Left ventricle myocardium superior (tissue), 1 donor: ENCODE measurements at regions of chr7 and their contacts with region 1.

Region 1: DNA sequence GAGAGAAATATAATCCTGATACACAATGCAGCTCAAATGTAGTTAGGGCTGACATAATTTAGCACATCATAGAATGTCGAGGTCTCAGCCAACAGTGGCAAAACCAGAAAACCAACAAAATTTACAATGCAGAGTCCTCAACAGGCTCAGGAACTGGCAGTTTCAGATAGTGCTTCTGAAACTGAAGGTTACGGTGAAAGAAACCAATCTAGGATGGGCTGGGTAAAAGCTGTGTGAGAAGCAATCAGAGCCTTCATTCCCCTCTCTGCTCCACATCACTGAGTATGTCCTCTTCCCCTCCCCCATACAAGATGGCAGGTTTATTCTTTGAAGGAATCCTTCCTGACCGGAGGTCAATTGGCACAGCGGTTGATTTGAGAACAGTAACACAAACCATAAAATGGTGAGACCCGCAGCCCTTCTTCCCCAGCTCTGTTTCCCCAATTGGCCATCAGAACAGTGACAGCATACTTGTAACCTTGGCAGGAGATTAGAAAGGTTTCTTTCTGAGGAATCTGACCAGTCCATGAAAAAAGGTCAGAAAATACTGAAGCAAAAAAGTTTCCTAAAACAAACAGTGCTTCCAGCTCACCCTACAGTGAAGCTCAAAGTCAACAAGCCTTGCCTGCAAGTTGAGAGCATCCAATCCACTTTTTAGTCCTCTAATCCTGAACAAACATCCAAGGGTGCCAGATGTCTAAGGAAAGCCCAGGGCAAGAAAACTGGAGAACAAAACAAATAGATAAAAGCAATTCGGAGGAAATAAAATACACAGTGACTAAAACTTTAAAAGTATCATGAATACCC is 54.0 kb upstream of the IL6 start:
- DNase-seq: no peak
- ATAC-seq: no peak

Region 2: GRCh38 chr7:22433710-22434460 is 239.2 kb before region 1 on chr7:
- intact Hi-C with region 1: no loop called
- DNase-seq: no peak
- ATAC-seq: peak; percentile 76

Region 3: GRCh38 chr7:22651534-22652243 is 21.4 kb before region 1 on chr7:
- intact Hi-C with region 1: loop called (anchors 2 kb)
- DNase-seq: no peak
- ATAC-seq: no peak